Activated naive CD4-positive, alpha-beta T cell treated with anti-CD3 and anti-CD28 coated beads for 36 hours (primary cell): ENCODE measurements at regions of chr3 and their contacts with region 1.

Region 1: DNA sequence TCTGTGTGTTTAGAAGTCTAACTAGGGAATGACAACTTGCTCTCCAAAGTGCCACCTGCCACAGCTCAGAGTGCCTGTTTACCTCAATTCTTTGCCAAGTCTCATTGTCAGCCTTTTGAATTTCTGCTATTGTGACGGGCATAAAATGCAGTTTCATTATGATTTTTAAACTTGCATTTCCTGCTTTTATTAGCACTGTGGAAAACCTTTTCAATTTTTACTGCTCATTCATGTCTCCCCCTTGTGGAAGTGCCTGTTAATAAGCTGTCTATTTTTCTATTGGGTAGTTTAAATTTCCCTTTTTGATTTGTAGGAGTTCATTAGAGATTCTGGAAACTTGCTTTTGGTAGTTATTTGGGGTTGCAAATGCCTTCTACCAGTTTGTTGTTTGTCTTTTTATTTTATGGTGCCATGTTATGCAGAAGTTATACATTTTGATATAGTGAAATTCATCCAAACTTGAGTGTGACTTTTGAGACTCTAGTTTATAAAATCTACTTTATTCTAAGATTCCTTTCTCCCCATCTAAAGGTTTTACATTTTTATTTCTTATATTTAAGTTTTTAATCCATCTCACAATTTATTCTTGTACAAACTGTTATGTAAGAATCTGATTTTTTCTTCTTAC is 53.9 kb upstream of the FRMD4B start:
- DNase-seq: peak; percentile 15
- H3K4me3 Mint-ChIP-seq: no peak overlapping the region
- H3K27ac Mint-ChIP-seq: peak overlapping the region; percentile 48
- H3K4me1 Mint-ChIP-seq: peaks cover 58% of the 10 kb centered on the region
- H3K27me3 Mint-ChIP-seq: peaks cover 5% of the 10 kb centered on the region

Region 2: GRCh38 chr3:69013253-69014021 is 426.3 kb before region 1 on chr3 and contains the start of gene EOGT:
- CTCF ChIA-PET with region 1: interaction called, 3 read pairs
- intact Hi-C with region 1: loop called (anchors 5 kb)
- DNase-seq: peak; percentile 88
- H3K4me3 Mint-ChIP-seq: peak within 1 kb of the TSS; percentile 78
- H3K27ac Mint-ChIP-seq: peak within 1 kb of the TSS; percentile 73
- H3K4me1 Mint-ChIP-seq: peaks cover 15% of the 10 kb centered on the region
- H3K27me3 Mint-ChIP-seq: no peaks in the 10 kb centered on the region
- total RNA-seq, gene EOGT: 4.8 TPM

Region 3: DNA sequence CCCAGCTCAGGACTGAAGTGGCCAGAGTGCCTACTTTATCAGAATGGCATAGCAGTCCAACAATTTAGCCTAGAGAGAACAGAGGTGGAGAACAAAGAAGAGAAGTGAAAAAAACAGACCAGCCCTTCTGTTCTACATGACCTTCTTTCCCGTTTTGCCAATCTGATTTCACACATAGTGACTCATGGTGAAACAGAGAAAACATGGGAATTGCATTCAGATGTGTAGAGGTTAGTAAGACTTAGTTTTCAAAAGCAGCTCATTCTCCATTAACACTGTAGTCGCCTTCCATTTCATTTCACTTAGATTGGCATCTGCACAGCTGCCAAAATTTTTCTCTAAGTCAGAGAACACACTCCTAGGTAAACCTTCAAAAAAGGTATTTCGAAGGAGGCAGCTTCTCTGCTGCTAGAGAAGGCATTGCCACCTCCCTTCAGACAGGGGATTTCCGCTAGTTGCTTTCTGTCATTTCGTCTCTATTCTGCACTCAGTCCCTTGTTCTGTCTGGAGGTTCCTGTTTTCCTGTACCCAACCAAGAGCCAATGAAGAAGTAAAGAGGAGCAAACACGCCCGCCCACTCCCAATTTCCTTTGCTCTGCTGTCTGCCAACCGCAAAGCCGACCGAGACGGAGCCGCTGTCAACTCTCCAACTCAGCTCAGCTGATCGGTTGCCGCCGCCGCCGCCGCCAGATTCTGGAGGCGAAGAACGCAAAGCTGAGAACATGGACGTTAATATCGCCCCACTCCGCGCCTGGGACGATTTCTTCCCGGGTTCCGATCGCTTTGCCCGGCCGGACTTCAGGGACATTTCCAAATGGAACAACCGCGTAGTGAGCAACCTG is 355.2 kb before region 1 on chr3 and contains the start of gene ARL6IP5:
- CTCF ChIA-PET with region 1: interaction called, 3 read pairs
- intact Hi-C with region 1: loop called (anchors 5 kb)
- DNase-seq: peak; percentile 97
- H3K4me3 Mint-ChIP-seq: peak within 1 kb of the TSS; percentile 89
- H3K27ac Mint-ChIP-seq: peak within 1 kb of the TSS; percentile 95
- H3K4me1 Mint-ChIP-seq: peaks cover 57% of the 10 kb centered on the region
- H3K27me3 Mint-ChIP-seq: no peaks in the 10 kb centered on the region
- total RNA-seq, gene ARL6IP5: 66.4 to 71.5 TPM

Region 4: DNA sequence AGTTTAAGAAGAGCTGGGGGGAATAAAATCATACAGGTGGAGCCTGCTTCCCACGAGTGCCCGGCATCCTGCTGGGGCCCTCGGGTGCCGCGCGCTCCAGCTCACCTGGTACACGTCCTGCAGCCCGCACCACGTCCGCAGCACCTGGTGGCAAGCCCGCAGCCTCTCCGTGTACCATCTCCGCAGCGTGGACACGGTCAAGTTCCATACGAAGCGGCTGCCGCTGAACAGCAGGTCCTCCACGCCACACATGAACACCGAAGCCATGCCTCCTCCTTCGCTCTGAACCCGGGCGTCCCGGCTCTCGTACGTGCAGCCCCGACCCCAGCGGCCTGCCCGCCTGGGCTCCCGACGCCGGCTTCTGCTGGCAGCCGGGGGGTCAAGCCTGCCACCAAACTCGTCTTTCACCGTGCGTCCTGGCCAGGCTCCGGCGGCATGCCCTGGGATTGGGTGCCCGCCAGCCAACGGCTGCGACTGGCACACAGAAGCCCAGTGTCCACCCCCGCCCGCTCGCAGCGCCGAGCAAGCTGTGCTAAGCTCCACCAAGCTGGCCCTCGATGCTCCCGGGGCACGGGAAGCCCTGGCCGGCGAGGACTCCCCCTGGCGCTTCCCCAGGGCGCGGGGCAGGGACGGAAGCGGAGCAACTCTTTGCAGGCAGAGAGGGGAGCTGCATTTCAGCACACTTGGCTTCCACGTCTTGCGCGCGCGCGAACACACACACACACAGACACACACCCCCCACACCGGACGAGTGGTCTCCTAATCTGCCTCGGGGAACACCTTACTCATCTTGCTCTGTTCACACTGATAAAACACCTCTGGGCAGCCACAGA is 53.8 kb before region 1 on chr3 and contains the start of gene FRMD4B:
- CTCF ChIA-PET with region 1: no interaction called
- intact Hi-C with region 1: no loop called
- DNase-seq: peak; percentile 51
- H3K4me3 Mint-ChIP-seq: peak within 1 kb of the TSS; percentile 61
- H3K27ac Mint-ChIP-seq: no peak within 1 kb of the TSS
- H3K4me1 Mint-ChIP-seq: peaks cover 3% of the 10 kb centered on the region
- H3K27me3 Mint-ChIP-seq: peaks cover 55% of the 10 kb centered on the region
- total RNA-seq, gene FRMD4B: 11.9 to 12.1 TPM

Region 5: GRCh38 chr3:69410250-69410649 is 29.5 kb before region 1 on chr3:
- CTCF ChIA-PET with region 1: interaction called, 4 read pairs
- intact Hi-C with region 1: loop called (anchors 2 kb)
- DNase-seq: peak; percentile 88
- H3K4me3 Mint-ChIP-seq: no peak overlapping the region
- H3K27ac Mint-ChIP-seq: no peak overlapping the region
- H3K4me1 Mint-ChIP-seq: peaks cover 3% of the 10 kb centered on the region
- H3K27me3 Mint-ChIP-seq: peaks cover 5% of the 10 kb centered on the region

Region 6: DNA sequence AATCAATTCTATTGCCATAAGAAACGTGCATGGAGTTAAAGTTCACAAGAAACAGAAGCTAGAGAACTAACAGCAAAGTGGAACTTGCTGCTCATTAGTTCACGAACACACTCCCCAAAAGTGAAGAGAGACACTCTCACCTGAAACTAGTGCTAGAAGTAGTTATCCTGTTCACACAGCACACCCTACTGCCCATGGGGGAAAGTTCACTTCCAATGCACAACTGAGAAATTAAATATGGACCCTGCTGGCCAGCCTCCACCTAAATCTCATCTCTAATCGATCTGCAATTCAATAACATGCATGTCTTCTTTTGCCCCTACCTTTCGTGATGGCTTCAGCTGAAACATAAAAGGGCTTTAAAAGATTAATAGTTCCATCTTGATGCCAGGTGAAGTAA is 14.5 kb before region 1 on chr3:
- CTCF ChIA-PET with region 1: interaction called, 19 read pairs
- intact Hi-C with region 1: no loop called
- DNase-seq: peak; percentile 57
- H3K4me3 Mint-ChIP-seq: no peak overlapping the region
- H3K27ac Mint-ChIP-seq: no peak overlapping the region
- H3K4me1 Mint-ChIP-seq: peaks cover 5% of the 10 kb centered on the region
- H3K27me3 Mint-ChIP-seq: no peaks in the 10 kb centered on the region

Region 7: GRCh38 chr3:69484507-69485393 is 45.0 kb after region 1 on chr3:
- CTCF ChIA-PET with region 1: no interaction called
- intact Hi-C with region 1: no loop called
- DNase-seq: no peak
- H3K4me3 Mint-ChIP-seq: no peak overlapping the region
- H3K27ac Mint-ChIP-seq: no peak overlapping the region
- H3K4me1 Mint-ChIP-seq: no peaks in the 10 kb centered on the region
- H3K27me3 Mint-ChIP-seq: peaks cover 22% of the 10 kb centered on the region

Region 8: DNA sequence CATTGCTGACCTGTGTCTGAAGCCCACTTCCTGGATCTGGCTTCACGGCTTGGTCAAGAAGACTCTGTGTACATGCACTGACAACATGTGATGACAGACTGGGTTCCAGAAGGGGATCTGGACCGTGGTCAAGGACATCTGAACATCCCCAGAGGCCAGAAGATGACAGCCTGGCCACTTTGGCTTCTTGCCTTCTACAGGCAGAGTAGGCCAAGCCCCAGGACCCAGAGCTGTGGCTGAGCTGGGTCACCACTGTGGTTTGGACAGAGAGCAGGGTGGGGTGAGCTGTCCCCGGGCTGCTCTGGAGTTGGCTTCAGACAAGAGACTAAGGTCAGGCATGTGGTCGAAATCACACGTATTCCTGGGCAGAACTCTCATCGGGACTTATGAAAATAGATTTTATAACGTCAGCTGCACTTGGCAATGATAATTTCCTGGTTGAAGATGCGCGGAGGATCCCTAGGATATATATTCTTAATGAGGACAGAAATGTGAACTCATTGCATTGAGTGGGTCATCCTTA is 60.2 kb after region 1 on chr3:
- CTCF ChIA-PET with region 1: no interaction called
- intact Hi-C with region 1: no loop called
- DNase-seq: no peak
- H3K4me3 Mint-ChIP-seq: no peak overlapping the region
- H3K27ac Mint-ChIP-seq: no peak overlapping the region
- H3K4me1 Mint-ChIP-seq: no peaks in the 10 kb centered on the region
- H3K27me3 Mint-ChIP-seq: peaks cover 6% of the 10 kb centered on the region

Region 9: DNA sequence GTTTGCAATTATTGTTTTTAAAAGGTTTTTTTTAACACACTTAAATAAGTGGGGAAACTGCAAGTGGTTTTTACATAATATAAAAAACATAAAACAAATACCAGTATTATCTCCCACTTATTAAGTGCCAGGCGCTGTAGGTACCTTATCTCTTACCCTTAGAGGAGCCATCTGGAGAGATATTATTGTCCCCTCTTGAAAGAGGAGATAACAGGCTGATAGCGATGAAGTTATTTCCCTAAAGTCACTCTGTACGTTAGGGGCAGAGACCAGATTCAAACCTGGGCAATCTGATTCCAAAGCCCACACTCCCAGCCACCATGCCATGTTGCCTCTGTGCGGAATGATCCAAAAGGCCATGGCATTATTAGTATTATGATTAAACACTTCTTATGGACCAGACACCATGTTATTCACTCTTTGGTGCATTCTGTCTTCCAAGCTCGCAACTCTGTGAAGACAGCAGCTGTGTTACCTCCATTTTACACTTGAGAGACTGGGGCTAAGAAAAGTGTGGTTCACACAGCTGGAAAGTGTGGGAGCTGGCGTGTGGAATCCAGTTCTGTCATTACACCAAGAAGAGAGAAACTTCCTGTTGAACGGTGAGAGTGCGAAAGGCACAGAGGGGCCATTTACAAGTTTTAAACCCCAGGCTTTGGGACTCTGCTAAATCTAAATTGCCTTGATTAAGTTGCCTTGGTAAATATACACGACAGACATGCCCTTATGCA is 219.6 kb after region 1 on chr3:
- CTCF ChIA-PET with region 1: no interaction called
- intact Hi-C with region 1: no loop called
- DNase-seq: no peak
- H3K4me3 Mint-ChIP-seq: no peak overlapping the region
- H3K27ac Mint-ChIP-seq: no peak overlapping the region
- H3K4me1 Mint-ChIP-seq: no peaks in the 10 kb centered on the region
- H3K27me3 Mint-ChIP-seq: no peaks in the 10 kb centered on the region

Region 10: DNA sequence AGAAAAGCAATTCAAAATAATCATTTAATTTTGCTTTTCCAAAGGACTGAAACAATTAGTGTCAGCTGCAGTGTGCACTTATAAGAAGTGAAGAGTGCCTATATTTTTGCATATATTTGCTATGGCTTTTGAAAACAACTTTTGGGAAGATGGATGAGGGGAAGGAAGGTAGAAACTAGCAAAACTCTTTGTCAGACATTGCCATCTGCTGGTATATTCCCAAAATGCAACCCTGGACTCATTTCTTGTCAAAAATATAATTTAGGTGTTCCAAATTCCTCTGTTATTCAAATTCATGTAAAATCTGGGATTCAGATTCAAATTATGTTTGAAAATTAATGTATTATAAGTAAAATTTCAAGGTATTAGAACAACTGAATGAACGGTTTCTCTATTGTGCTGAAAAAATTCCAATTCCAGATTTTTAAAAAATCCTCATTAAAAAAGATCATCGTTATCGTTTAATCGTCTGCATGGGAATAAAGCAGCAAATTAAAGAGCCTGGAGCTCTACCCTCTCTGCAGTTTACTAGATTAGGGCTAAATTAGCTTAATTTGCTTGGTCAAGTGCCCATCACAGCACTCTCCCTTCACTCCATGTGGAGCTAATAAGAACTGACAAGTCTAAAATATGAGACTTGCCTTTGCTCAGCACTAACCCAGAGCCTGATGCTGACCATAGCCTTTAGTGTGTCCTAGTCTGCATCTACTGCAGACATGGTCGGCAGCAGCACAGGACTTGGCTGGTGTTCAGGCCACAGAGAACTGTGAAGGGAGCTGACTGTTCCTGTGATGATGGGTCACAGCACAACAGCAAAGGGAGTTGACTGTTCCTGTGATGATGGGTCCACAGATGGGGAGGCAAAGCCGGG is 231.6 kb after region 1 on chr3:
- CTCF ChIA-PET with region 1: no interaction called
- intact Hi-C with region 1: loop called (anchors 1 kb)
- DNase-seq: peak; percentile 30
- H3K4me3 Mint-ChIP-seq: no peak overlapping the region
- H3K27ac Mint-ChIP-seq: no peak overlapping the region
- H3K4me1 Mint-ChIP-seq: no peaks in the 10 kb centered on the region
- H3K27me3 Mint-ChIP-seq: no peaks in the 10 kb centered on the region

Region 11: DNA sequence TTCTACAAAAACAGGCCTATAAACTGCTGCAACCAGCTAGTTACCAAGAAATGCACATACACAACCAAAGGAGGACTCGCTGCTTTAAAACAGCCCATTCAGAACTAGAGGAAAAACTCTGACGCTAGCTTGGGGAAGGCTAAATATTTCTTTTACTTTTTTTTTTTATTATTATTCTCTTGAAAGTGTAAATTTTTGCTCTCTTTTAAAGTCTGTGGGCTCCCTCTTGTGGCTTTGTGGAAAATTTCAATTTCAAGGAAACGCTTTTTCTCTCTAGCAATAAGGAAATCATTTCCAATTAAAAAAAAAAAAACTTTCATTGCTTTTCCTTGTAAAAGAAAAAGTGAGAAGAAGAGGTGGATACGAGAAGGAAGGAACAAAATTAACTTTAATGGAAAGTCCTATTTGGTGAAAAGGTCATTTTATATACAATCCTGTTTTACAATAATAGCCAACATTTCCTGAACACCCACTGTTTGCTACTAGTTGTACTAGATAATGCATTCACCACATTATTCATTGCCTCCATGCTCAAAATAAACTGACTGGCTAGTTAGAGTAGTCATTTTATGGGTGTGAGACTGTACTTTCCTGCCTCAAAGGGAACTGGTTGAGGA is 508.6 kb after region 1 on chr3:
- CTCF ChIA-PET with region 1: no interaction called
- intact Hi-C with region 1: loop called (anchors 10 kb)
- DNase-seq: no peak
- H3K4me3 Mint-ChIP-seq: no peak overlapping the region
- H3K27ac Mint-ChIP-seq: no peak overlapping the region
- H3K4me1 Mint-ChIP-seq: no peaks in the 10 kb centered on the region
- H3K27me3 Mint-ChIP-seq: no peaks in the 10 kb centered on the region